Gastrocnemius medialis (tissue), 4 donors: ENCODE measurements at regions of chr12 and their contacts with region 1.

Region 1: DNA sequence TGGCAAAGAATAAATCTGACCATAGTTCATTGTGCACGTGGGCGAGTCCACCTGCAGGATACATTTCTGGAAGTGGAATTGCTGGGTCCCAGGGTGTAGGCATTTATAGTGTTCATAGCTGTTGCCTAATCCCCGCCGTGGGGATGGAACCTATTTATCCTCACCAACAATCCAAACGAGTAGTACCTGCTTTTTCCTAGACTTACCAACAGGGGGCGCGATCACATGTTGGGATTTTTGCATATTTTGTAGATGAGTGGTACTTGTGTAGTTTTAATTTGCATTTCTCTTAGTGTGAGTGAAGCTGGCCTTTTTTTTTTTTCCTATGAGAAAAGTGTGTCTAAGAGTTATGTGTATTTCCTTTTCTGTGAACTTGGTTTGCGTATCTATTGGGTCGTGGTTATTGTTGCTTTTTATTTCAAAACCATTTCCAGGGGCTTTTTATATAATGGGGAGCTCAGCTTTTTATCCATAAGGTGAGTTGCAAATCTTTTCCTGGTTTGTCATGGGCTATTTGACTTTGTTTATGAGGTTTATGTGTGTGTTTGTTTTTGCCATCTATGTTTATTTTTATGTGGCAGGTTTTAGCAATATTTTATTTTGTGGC is 67.2 kb downstream of the CCDC92 start:
- DNase-seq: peak in 1 of 2 donors; percentile 20
- ATAC-seq: peak in 1 of 2 donors; percentile 19
- H3K4me3 ChIP-seq: no peak overlapping the region
- H3K27ac ChIP-seq: no peak overlapping the region
- H3K4me1 ChIP-seq: no peaks in the 10 kb centered on the region
- H3K27me3 ChIP-seq: no peaks in the 10 kb centered on the region
- CTCF ChIP-seq: peak; percentile 32 to 77 (median 55)
- POLR2A ChIP-seq: no peak

Region 2: DNA sequence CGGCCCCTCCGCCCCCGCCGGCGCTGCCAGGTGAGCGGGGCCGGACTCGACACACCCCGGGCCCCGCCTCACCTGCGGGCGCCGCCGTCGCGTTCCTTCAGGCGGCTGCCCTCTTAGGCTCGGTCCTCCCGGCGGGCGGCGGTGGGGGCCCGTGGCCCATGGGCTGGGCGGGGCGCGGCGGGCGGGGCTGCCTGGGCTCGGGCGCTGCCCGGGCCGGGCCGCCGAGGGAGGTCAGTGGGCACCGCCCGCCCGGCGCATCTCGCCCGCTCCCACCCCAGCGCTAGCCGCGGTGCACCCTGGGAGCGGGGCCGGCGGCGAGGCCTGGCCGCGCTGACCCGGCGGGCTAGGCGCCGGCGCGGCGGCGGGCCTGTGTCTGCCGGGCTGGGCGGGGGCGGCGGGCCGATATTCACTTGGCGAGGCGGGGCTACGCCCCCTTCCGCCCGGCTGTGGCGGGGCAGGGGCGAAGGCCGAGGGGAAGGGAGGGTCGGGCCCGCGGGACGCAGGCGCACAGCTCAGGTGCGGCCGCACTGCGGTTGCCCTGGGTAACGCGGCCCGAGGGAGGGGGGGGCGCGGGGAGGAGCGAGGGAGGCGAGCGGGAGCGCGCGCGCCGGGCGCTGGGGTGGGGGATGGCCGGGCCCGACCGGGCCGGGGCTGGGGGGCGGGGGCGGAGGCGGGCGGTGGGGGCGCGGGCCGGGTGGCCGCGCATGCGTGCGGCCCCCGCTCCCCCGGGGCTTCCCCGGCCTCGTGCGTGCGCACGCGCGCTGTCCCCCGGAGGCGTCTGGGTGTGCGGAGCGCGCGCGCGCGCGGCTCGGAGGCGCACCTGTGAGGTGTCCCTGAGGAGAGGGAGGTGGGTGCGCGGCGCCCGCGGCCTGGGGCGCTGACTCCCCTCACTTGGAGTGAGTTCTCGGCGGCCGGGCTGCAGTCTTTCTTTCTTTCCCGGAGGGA is 67.3 kb after region 1 on chr12 and contains the starts of genes CCDC92 and ZNF664:
- in situ Hi-C with region 1: no loop called
- intact Hi-C with region 1: no loop called
- DNase-seq: peak; percentile 85 to 89
- ATAC-seq: peak; percentile 79 to 82
- H3K4me3 ChIP-seq: peak within 1 kb of the TSS; percentile 72 to 96 (median 94)
- H3K27ac ChIP-seq: peak within 1 kb of the TSS; percentile 91 to 92 (median 92)
- H3K4me1 ChIP-seq: peaks cover 10 to 13% of the 10 kb centered on the region in 2 donors
- H3K27me3 ChIP-seq: no peaks in the 10 kb centered on the region
- CTCF ChIP-seq: peak in 3 of 5 experiments; percentile 15 to 33 (median 22)
- POLR2A ChIP-seq: peak; percentile 65 to 77
- total RNA-seq, gene CCDC92: 21.1 to 29.1 (median 23.7) TPM
- total RNA-seq, gene ZNF664: 18.1 to 37.0 (median 32.6) TPM

Region 3: GRCh38 chr12:123983822-123984485 is 78.5 kb after region 1 on chr12:
- in situ Hi-C with region 1: loop called in 2 of 4 experiments (anchors 5 to 10 kb)
- intact Hi-C with region 1: loop called (anchors 5 kb)
- DNase-seq: peak; percentile 18 to 36
- ATAC-seq: peak; percentile 83 to 85
- H3K4me3 ChIP-seq: no peak overlapping the region
- H3K27ac ChIP-seq: peak overlapping the region in 1 of 4 donors; percentile 7
- H3K4me1 ChIP-seq: peaks cover 9 to 30% of the 10 kb centered on the region in 2 donors
- H3K27me3 ChIP-seq: no peaks in the 10 kb centered on the region
- CTCF ChIP-seq: peak; percentile 36 to 63 (median 50)
- POLR2A ChIP-seq: no peak